HepG2 (cell line): ENCODE measurements at regions of chr13 and their contacts with region 1.

Region 1: GRCh38 chr13:33542283-33543088 is 256.9 kb upstream of the STARD13 start:
- DNase-seq: peak; percentile 96
- ATAC-seq: peak; percentile 96
- H3K4me3 ChIP-seq: peak overlapping the region; percentile 57 to 85 (median 74)
- H3K27ac ChIP-seq: peak overlapping the region; percentile 99
- H3K4me1 ChIP-seq: peaks cover 42% of the 10 kb centered on the region
- H3K27me3 ChIP-seq: no peaks in the 10 kb centered on the region; a peak in 1 of 5 replicates
- CTCF ChIP-seq: peak; percentile 99
- EP300 ChIP-seq: peak in 1 of 2 experiments; percentile 77; a peak in 2 of 4 replicates
- POLR2A ChIP-seq: peak; percentile 57 to 81; a peak in 3 of 4 replicates
- RAD21 ChIP-seq: peak; percentile 99

Region 2: GRCh38 chr13:32586080-32586900 is 956.2 kb before region 1 on chr13 and contains the start of gene PDS5B:
- CTCF ChIA-PET with region 1: no interaction called
- POLR2A ChIA-PET with region 1: interaction called, 4 read pairs
- in situ Hi-C with region 1: loop called (anchors 25 kb)
- intact Hi-C with region 1: loop called (anchors 2 kb)
- DNase-seq: peak; percentile 87
- ATAC-seq: peak; percentile 90
- H3K4me3 ChIP-seq: peak within 1 kb of the TSS; percentile 83 to 96 (median 85)
- H3K27ac ChIP-seq: peak within 1 kb of the TSS; percentile 94
- H3K4me1 ChIP-seq: peaks cover 31% of the 10 kb centered on the region
- H3K27me3 ChIP-seq: no peaks in the 10 kb centered on the region; a peak in 1 of 5 replicates
- CTCF ChIP-seq: peak; percentile 92
- EP300 ChIP-seq: no peak
- POLR2A ChIP-seq: peak; percentile 47 to 50; a peak in 1 of 4 replicates
- RAD21 ChIP-seq: peak; percentile 99
- total RNA-seq, gene PDS5B: 24.6 and 53.7 TPM in 2 replicates

Region 3: DNA sequence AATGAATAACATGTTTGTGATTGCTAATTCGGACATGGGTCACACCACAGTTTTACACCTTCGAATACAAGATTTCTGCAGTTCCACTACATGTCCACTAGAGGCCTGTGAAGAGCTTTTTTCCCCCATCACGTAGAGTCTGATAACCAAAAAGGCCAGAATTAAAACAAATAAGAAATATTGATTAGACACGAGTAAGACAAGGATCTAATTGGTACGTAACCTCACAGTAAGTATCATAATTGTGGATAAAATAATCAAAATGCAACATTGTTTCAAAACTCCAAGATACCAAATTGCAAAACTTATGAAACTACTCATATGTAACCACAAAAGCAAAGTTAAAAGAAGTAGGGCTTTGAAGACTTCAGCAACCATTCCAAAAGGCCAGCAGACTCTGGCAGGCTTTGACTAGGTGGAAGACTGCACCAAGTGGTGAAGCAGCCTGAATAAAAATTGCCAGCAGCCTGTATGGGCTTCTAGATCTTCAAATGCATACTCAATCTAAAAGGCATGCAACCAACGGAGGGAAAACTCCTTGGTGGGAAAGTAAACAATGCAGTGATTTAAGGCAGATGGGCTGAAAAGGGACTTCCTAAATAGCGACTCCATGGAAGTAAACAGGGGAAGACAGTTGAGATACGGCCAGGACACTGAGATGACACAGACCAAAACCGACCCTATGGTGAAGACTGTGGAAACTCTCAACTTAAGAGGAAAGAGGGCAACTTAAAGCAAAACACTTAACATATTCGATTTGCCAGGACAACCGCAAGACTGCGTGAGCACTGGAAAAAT is 313.6 kb before region 1 on chr13:
- CTCF ChIA-PET with region 1: interaction called, 10 read pairs
- POLR2A ChIA-PET with region 1: interaction called, 10 read pairs
- in situ Hi-C with region 1: loop called (anchors 10 kb)
- intact Hi-C with region 1: loop called (anchors 1 kb)
- DNase-seq: peak; percentile 62
- ATAC-seq: peak; percentile 57
- H3K4me3 ChIP-seq: peak overlapping the region; percentile 2 to 52 (median 5); a peak in 3 of 6 replicates
- H3K27ac ChIP-seq: peak overlapping the region; percentile 96
- H3K4me1 ChIP-seq: peaks cover 55% of the 10 kb centered on the region
- H3K27me3 ChIP-seq: no peaks in the 10 kb centered on the region
- CTCF ChIP-seq: peak; percentile 76
- EP300 ChIP-seq: no peak
- POLR2A ChIP-seq: no peak
- RAD21 ChIP-seq: peak; percentile 80

Region 4: GRCh38 chr13:33285420-33286124 is 256.9 kb before region 1 on chr13 and contains the start of gene STARD13:
- CTCF ChIA-PET with region 1: no interaction called
- POLR2A ChIA-PET with region 1: interaction called, 5 read pairs
- in situ Hi-C with region 1: no loop called
- intact Hi-C with region 1: loop called (anchors 1 kb)
- DNase-seq: peak; percentile 92
- ATAC-seq: peak; percentile 99
- H3K4me3 ChIP-seq: peak within 1 kb of the TSS; percentile 84 to 96 (median 86)
- H3K27ac ChIP-seq: peak within 1 kb of the TSS; percentile 85
- H3K4me1 ChIP-seq: peaks cover 41% of the 10 kb centered on the region
- H3K27me3 ChIP-seq: peaks cover 0 to 5% of the 10 kb centered on the region in 2 experiments; a peak in 1 of 5 replicates
- CTCF ChIP-seq: peak; percentile 57
- EP300 ChIP-seq: no peak
- POLR2A ChIP-seq: peak; percentile 76 to 81
- RAD21 ChIP-seq: no peak
- total RNA-seq, gene STARD13: 13.8 and 14.3 TPM in 2 replicates

Region 5: DNA sequence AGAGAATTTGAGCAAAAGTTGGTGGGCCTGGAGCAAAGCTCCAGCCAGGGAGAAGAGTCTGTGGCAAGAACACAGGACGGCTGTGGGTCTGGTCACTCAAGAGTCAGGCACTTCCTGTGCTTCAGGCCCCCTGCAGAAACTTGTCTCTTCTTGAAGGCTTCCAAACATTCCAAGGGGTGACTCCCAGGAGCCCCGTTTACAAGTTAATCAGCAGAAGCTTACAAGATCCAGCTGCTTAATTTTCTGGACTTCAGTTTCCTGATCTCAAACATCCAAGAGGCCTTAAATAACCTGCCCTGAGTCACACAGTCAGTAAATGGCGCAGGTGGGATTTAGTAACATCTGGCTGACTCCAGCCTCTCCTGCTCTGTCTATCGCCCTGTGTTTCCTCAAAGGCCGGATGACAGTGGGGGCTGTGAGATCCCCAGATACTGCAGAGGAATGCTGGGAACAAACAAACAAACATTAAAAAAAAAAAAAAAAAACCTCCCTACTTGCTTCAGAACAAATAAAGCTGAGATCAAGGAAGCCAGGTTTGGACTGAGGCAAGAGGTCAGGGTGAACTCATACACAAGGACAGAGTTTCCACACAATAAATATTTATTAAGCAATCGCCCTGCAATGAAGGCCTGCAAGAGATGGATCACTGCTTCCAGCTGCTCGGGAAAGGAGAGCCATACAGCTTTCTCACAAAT is 100.0 kb after region 1 on chr13:
- CTCF ChIA-PET with region 1: no interaction called
- POLR2A ChIA-PET with region 1: interaction called, 27 read pairs
- in situ Hi-C with region 1: no loop called
- intact Hi-C with region 1: no loop called
- DNase-seq: peak; percentile 99
- ATAC-seq: peak; percentile 97
- H3K4me3 ChIP-seq: peak overlapping the region in 2 of 3 experiments; percentile 27 to 45; a peak in 3 of 6 replicates
- H3K27ac ChIP-seq: peak overlapping the region; percentile 97
- H3K4me1 ChIP-seq: peaks cover 90% of the 10 kb centered on the region
- H3K27me3 ChIP-seq: no peaks in the 10 kb centered on the region
- CTCF ChIP-seq: no peak
- EP300 ChIP-seq: peak; percentile 94 to 98
- POLR2A ChIP-seq: peak in 1 of 2 experiments; percentile 57; a peak in 2 of 4 replicates
- RAD21 ChIP-seq: no peak

Region 6: DNA sequence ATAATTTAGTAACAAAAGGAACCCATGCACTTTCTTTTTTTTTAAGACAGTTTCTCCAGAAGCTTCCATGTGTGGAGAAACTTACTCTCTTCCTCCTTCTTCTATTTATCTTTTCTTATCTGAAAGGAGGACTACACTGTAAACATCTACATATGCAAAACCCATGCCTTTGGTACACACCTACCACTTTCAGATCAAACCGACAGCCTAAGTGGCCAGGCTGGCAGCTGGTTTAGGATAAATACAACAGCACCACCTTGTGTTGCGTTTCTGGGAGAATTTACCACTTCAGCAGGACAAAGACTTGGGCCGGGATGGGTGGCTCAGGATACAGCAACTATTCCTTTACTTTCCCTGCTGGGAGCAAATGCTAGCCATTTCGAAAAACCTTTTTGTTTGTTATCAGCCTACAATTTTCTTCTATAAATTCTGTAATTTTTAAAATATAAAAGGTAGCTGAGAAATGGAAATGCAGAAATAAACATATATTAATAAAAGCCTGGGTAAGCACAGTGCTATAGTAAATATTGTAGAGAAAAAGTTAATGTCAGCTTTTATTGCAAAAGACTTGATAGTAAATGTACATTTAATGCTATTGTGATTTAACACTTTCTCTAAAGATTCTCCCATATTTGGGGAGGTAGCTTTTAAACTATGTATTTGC is 181.4 kb after region 1 on chr13:
- CTCF ChIA-PET with region 1: interaction called, 13 read pairs
- POLR2A ChIA-PET with region 1: interaction called, 14 read pairs
- in situ Hi-C with region 1: loop called (anchors 5 kb)
- intact Hi-C with region 1: loop called (anchors 1 kb)
- DNase-seq: peak; percentile 83
- ATAC-seq: peak; percentile 99
- H3K4me3 ChIP-seq: no peak overlapping the region; a peak in 1 of 6 replicates
- H3K27ac ChIP-seq: peak overlapping the region; percentile 28
- H3K4me1 ChIP-seq: peaks cover 28% of the 10 kb centered on the region
- H3K27me3 ChIP-seq: no peaks in the 10 kb centered on the region
- CTCF ChIP-seq: peak; percentile 95
- EP300 ChIP-seq: no peak
- POLR2A ChIP-seq: no peak
- RAD21 ChIP-seq: peak; percentile 88